Ascending aorta (tissue), 2 donors: ENCODE measurements at regions of chr6 and their contacts with region 1.

Region 1: GRCh38 chr6:28335564-28336283 is at the start of gene ZSCAN31:
- DNase-seq: peak; percentile 57 to 99
- H3K4me3 ChIP-seq: peak within 1 kb of the TSS; percentile 69 to 83
- H3K27ac ChIP-seq: peak within 1 kb of the TSS; percentile 96 to 99
- H3K4me1 ChIP-seq: peaks cover 0 to 8% of the 10 kb centered on the region in 2 donors
- H3K27me3 ChIP-seq: no peaks in the 10 kb centered on the region
- CTCF ChIP-seq: no peak
- total RNA-seq, gene ZSCAN31: 0.21 TPM

Region 2: GRCh38 chr6:27132532-27133280 is 1203.0 kb before region 1 on chr6:
- intact Hi-C with region 1: loop called (anchors 10 kb)
- DNase-seq: peak; percentile 82 to 97
- H3K4me3 ChIP-seq: peak overlapping the region; percentile 69 to 75
- H3K27ac ChIP-seq: peak overlapping the region; percentile 88 to 89
- H3K4me1 ChIP-seq: peaks cover 4 to 10% of the 10 kb centered on the region in 2 donors
- H3K27me3 ChIP-seq: no peaks in the 10 kb centered on the region
- CTCF ChIP-seq: no peak

Region 3: DNA sequence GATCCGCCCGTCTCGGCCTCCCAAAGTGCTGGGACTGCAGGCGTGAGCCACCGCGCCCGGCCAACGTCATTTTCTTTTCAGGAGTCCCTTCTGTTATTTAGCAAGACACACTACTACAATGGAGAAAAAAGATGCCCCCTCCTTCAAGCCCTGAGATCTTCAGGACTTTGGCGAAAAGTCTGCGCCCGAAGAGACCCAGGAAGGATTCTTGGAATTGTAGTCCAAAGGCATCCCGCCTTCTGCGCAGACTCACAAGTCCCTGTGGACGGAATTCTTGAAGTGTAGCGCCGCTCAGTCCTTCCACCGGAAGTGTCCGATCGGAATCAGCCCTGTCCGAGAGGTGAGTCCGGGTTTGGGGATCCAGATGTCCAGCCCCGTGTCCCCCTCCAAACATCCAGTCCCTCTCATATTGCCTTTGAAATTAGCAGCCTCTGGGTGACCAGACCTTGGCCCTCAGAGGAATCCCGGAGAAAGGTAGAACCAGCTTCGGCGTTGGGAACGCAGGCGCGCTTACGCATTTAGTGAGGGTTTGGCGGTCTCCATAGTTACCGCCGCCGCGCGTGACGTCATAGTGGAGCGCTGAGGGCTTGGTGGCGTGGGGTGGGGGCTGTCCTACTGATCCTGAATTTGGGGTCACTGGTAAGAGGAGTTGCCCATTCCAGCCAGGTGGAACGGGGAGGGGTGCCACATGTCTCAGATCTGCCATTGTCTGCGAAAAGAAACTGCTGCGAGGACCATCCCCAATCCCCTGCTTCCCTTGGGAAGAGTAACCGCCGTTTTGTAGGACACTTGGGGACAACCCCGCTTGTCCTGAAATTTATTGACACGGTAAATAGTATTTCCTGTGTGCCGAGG is 254.9 kb before region 1 on chr6:
- intact Hi-C with region 1: loop called (anchors 5 kb)
- DNase-seq: peak; percentile 75 to 96
- H3K4me3 ChIP-seq: peak overlapping the region; percentile 56 to 72
- H3K27ac ChIP-seq: peak overlapping the region; percentile 83
- H3K4me1 ChIP-seq: peaks cover 0 to 7% of the 10 kb centered on the region in 2 donors
- H3K27me3 ChIP-seq: no peaks in the 10 kb centered on the region
- CTCF ChIP-seq: no peak

Region 4: GRCh38 chr6:28225056-28225834 is 110.5 kb before region 1 on chr6 and contains the start of gene ZSCAN9:
- intact Hi-C with region 1: loop called (anchors 1 kb)
- DNase-seq: peak; percentile 44 to 95
- H3K4me3 ChIP-seq: peak within 1 kb of the TSS; percentile 67 to 73
- H3K27ac ChIP-seq: peak within 1 kb of the TSS; percentile 75 to 80
- H3K4me1 ChIP-seq: peaks cover 0 to 4% of the 10 kb centered on the region in 2 donors
- H3K27me3 ChIP-seq: no peaks in the 10 kb centered on the region
- CTCF ChIP-seq: no peak
- total RNA-seq, gene ZSCAN9: 3.7 TPM

Region 5: DNA sequence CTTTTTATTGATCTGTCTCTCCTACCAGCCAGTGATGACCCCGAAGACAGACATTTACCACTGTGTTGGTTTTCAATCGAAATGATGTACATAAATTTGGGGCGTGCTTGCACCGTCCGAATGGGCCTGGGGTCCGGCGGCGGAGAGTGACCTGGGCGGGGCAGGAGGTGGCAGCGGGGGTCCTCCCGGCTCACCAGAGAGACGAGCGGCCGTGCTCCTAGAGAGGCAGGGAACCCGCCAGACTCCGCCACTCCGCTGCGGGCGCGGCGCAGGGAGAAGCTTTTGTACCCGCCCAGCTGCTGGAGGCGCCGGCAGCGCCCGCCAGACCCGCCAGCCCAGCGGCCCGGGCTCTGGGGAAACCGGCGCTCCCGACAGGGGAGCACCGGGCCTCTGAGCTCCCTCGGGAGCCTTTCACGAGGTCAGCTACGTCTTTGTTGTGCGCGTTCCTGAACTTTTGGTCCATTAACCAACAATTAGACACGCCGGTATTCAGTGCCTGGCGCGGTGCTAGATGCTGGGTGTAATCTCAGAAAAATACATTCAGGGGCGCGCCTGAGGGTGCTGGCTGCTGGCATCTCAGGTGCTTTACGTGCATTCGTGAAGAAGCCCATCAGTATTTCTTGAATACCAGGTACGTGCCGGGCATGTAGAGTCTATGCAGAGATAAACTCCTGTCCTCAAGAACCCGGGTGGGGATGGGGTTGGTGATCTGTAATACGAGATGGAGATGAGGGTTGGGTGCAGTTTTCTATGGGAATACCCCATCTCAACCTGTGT is 54.2 kb before region 1 on chr6 and contains the start of gene PGBD1:
- intact Hi-C with region 1: loop called (anchors 5 kb)
- DNase-seq: peak in 1 of 2 donors; percentile 82
- H3K4me3 ChIP-seq: peak within 1 kb of the TSS; percentile 68 to 80
- H3K27ac ChIP-seq: peak within 1 kb of the TSS; percentile 45 to 63
- H3K4me1 ChIP-seq: peaks cover 0 to 4% of the 10 kb centered on the region in 2 donors
- H3K27me3 ChIP-seq: no peaks in the 10 kb centered on the region
- CTCF ChIP-seq: no peak
- total RNA-seq, gene PGBD1: 3.0 TPM

Region 6: DNA sequence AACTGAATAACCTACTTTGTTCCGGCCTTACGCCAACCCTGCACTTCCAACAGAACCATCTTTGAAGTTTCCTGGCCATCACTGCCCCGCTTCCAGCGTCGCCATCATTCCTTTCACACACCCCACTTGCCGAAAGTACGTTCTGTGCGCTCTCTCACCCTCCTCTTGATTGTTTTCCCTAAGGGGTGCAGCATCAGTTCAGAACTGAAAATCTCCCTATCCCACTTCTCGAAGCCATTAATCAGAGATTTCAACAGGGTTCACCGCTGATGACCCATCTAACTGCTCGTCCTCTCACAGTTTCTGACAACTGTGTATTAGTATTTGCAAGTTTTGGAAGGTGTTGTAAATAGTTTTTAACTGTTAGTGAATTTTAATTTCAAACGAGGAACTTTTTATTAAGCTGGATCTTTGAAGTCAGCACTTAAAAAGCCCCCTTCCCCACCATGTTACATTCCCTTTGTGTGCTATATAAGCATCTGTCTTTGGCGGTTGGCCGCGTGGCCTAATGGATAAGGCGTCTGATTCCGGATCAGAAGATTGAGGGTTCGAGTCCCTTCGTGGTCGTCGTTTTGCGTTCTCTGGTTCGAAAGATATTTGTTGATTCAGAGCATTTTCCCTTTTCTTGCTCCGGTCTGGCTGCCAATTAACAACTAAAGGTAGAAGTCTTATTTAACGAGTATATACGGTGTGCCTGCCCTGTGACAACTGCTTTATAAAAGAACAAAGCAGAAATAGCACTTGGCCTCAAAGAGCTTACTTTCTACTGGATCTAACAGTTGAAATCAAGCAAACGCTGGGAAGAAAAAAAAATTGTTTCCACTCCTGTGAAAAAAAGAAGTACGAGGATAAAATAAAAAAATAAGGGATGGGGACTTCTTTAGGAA is 545.4 kb after region 1 on chr6:
- intact Hi-C with region 1: loop called (anchors 5 kb)
- DNase-seq: peak in 1 of 2 donors; percentile 86
- H3K4me3 ChIP-seq: peak overlapping the region; percentile 48 to 64
- H3K27ac ChIP-seq: no peak overlapping the region
- H3K4me1 ChIP-seq: no peaks in the 10 kb centered on the region
- H3K27me3 ChIP-seq: peaks cover 3% of the 10 kb centered on the region
- CTCF ChIP-seq: no peak